ENCODE measurements at regions of chr17 and their contacts with region 1.

Region 1: GRCh38 chr17:74961657-74962490 is 10.7 kb downstream of the HID1 start:
- DNase-seq: no peak
- H3K4me3 ChIP-seq: no peak overlapping the region
- H3K27me3 ChIP-seq: peaks cover under 1% of the 10 kb centered on the region; the same call in 1 of the 2 replicates
- CTCF ChIP-seq: peak; percentile 70

Region 2: GRCh38 chr17:74923533-74924249 is 38.2 kb before region 1 on chr17:
- CTCF ChIA-PET with region 1: interaction called, 48 read pairs
- POLR2A ChIA-PET with region 1: no interaction called
- DNase-seq: no peak
- H3K4me3 ChIP-seq: no peak overlapping the region
- H3K27me3 ChIP-seq: peaks cover 41% of the 10 kb centered on the region
- CTCF ChIP-seq: peak; percentile 75

Region 3: GRCh38 chr17:74972107-74972972 is 10.5 kb after region 1 on chr17 and contains the start of gene HID1:
- CTCF ChIA-PET with region 1: interaction called, 26 read pairs
- POLR2A ChIA-PET with region 1: no interaction called
- DNase-seq: no peak
- H3K4me3 ChIP-seq: peak within 1 kb of the TSS; percentile 55
- H3K27me3 ChIP-seq: peaks cover 9% of the 10 kb centered on the region
- CTCF ChIP-seq: no peak
- polyA plus RNA-seq, gene HID1: 1.7 and 1.8 TPM in 2 replicates

Region 4: DNA sequence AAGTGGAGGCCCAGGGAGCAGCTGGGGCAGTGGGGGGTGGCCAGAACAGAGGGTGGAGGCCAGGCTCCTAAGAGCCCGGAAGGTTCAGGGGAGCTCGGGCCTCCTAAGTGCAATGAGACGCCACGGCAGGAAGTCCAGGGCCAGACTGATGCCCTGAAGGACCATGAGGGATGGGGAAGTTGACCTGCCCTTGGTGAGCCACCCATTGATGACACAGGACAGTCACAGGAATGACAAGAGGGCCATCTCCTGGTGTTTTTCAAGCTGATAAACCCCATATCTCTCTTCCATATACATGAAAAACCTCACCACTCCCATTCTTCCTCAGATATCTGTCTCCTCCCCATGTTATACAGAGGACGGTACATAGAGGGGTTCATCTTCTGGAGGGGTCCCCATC is 44.8 kb after region 1 on chr17:
- CTCF ChIA-PET with region 1: interaction called, 52 read pairs
- POLR2A ChIA-PET with region 1: no interaction called
- DNase-seq: no peak
- H3K4me3 ChIP-seq: no peak overlapping the region
- H3K27me3 ChIP-seq: no peaks in the 10 kb centered on the region
- CTCF ChIP-seq: no peak

Region 5: DNA sequence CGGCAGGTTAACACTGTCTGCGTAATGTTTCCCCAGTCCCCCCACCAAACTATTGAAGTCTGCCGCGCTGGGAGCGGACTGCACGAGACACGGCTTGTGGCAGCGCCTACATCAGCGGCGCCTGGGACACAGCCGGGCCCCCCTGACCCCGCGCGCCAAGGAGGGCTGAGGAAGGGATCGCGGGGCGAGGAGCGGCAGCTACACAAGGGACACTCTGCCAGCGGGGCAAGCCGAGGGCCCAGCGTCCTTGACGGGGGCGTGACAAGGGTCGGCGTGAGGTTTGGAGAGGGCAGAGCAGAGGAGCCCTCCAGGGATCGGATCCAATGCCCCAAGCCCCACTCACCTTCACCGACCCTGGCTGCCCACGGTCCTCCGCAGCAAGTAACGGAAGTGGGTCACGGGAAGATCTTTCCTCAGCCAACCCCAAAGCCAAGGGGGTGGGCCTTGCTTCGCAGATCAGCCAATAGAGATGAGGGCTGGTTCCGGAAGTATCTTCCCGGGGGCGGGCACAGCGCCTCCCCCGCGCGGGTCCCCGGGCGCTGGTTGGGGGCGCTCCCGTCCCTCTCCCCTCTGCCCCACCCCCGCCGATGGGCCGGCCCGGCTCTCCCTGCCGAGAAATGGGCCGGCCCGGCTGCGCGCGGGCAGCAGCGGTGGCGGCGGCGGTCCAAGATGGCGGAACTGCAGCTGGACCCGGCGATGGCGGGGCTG is 84.9 kb after region 1 on chr17 and contains the starts of genes ATP5PD and KCTD2:
- CTCF ChIA-PET with region 1: interaction called, 17 read pairs
- POLR2A ChIA-PET with region 1: no interaction called
- DNase-seq: peak; percentile 85
- H3K4me3 ChIP-seq: peak within 1 kb of the TSS; percentile 100
- H3K27me3 ChIP-seq: no peaks in the 10 kb centered on the region
- CTCF ChIP-seq: no peak
- polyA plus RNA-seq, gene ATP5PD: 160 and 304 TPM in 2 replicates
- polyA plus RNA-seq, gene KCTD2: 23.5 and 28.0 TPM in 2 replicates

Region 6: GRCh38 chr17:75199886-75200618 is 238.2 kb after region 1 on chr17:
- CTCF ChIA-PET with region 1: interaction called, 41 read pairs
- POLR2A ChIA-PET with region 1: no interaction called
- DNase-seq: no peak
- H3K4me3 ChIP-seq: no peak overlapping the region
- H3K27me3 ChIP-seq: no peaks in the 10 kb centered on the region
- CTCF ChIP-seq: no peak